Dorsolateral prefrontal cortex (tissue), 120 donors: ENCODE measurements at regions of chr14 and their contacts with region 1.

Region 1: DNA sequence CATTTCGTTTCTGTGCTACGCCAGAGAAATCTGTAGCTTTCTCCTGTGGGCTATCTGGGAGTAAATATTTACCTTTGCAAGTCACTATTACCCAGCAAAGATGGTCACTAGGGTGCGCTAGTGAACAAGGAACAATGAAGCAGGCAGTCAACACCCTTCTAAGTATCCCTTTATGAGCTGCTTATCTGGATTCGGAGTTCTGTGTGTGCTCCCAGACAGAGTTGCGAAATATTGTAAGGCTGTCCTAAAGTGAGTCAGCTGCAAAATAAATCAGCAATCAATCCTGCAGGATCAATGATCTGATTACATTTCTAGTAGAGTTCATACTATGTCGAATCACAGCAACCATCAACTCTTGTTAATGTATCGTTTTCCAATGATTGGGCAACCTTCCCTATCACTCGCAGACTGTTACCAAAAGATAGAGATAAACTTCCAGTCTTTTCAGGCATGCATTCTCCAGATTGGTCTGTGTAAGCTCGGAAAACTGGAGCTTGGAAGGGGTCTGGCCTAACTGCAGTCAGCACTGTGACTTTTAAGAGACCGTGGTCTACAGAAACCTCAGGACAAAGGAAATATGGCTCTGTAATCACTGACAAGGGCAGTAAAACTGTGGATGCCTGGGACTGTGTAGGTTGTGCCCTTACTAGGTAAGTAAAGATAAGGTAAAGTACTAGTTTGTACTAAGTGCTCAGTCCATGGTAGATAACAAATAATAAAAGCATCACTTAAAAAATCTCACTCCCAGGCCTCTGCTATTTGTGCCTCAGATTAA is 133.5 kb downstream of the KCNK10 start:
- DNase-seq: peak in 6 of 10 donors; percentile 46 to 88 (median 69)
- H3K4me3 ChIP-seq: peak overlapping the region in 23 of 59 donors; percentile 1 to 42 (median 21)
- H3K27ac ChIP-seq: peak overlapping the region in 7 of 59 donors; percentile 15 to 56 (median 33)
- H3K27me3 ChIP-seq: peaks cover 0 to 4% (median 0%) of the 10 kb centered on the region in 45 donors
- CTCF ChIP-seq: peak; percentile 35 to 87 (median 74)

Region 2: DNA sequence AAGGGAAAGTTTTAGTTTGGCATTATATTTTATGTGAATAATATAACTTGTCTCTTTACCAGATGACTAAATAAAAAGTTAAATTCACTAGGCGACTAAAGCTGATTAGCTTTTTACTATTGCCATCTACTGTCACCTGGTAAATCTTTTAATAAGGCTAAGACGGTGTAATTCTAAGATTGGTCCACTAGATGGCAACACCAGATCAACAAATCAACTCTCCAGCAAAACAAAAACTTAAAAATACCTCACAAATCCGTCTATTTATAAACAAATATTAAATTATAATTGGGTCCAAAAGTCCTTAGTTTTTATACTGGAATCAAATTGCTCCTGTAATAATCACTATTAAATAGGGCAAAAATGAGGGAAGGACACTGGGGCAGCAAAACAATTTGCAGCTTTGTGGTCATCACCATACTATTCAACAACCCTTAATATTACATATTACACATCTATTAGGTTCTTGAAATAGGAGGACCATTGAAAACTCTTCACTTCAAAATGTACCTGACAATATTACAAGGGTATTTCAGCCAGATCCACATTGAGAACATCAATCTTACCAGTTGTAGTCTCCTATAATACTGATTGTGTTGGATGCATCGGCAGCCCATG is 244.5 kb before region 1 on chr14:
- intact Hi-C with region 1: loop called in 1 of 2 experiments (anchors 10 kb)
- DNase-seq: no peak
- H3K4me3 ChIP-seq: no peak overlapping the region
- H3K27ac ChIP-seq: no peak overlapping the region
- H3K27me3 ChIP-seq: no peaks in the 10 kb centered on the region
- CTCF ChIP-seq: peak in 55 of 56 donors; percentile 50 to 84 (median 72)

Region 3: GRCh38 chr14:88129306-88130056 is 60.1 kb before region 1 on chr14:
- intact Hi-C with region 1: no loop called
- DNase-seq: peak in 1 of 10 donors; percentile 42
- H3K4me3 ChIP-seq: no peak overlapping the region
- H3K27ac ChIP-seq: peak overlapping the region in 43 of 59 donors; percentile 12 to 83 (median 59)
- H3K27me3 ChIP-seq: no peaks in the 10 kb centered on the region
- CTCF ChIP-seq: peak in 33 of 56 donors; percentile 2 to 49 (median 26)

Region 4: DNA sequence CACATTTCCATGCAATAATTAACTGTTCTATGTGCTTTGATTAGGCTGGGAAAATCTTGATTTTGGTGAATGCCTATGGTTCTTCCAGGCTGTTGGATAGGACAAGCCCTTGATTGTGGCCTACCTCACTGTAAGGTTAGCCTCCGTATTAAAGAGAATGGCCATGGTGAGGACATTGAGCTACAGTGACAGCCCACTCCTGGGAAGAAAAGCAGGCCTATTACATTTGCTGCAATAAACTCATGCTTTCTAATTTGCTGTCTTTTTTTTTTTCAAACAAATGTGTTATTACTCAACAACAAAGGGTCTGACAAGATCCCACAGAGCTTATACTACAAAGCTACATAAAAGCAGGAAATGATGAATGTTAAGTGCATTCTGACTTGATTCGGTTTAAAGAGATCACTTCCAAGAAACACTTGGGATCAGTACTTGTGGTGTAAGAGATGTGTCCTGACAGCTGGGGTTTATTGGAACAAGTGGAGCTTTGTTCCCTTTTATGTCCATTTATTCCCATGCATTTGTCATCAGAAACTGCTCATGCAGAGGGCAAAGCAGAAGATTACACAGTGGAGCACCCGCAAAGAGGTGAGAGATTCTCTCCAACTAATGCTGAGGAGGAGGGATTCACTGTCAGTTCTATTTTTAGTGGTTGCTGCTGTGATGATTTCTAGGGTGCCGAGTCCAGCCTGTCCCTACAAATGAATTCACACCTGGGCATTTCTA is 162.5 kb after region 1 on chr14:
- intact Hi-C with region 1: no loop called
- DNase-seq: no peak
- H3K4me3 ChIP-seq: peak overlapping the region in 6 of 59 donors; percentile 5 to 29 (median 10)
- H3K27ac ChIP-seq: peak overlapping the region; percentile 35 to 94 (median 84)
- H3K27me3 ChIP-seq: no peaks in the 10 kb centered on the region
- CTCF ChIP-seq: peak in 1 of 56 donors; percentile 15

Region 5: DNA sequence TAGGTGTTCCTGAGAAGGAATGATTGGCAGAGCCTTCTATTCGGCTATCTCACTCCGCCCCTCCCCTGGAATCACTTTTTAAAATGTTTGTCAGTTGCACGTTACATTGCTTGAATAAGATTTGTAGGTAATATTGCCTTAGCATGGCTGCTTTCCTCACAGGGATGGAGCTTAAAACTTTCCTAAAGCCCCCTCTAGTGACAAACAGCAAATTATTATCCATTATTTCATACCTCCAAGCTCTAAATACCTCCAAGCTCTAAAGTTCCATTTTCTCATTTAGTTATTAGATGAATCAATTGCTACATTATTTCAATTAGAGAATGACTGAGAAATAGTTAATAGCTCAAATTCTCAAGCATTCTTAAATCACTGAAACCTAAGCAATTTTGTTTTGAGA is 190.8 kb after region 1 on chr14:
- intact Hi-C with region 1: loop called (anchors 1 to 5 kb)
- DNase-seq: no peak
- H3K4me3 ChIP-seq: no peak overlapping the region
- H3K27ac ChIP-seq: peak overlapping the region in 3 of 59 donors; percentile 11 to 31 (median 18)
- H3K27me3 ChIP-seq: no peaks in the 10 kb centered on the region
- CTCF ChIP-seq: peak in 53 of 56 donors; percentile 10 to 74 (median 51)